HEK293 (cell line): ENCODE measurements at regions of chr10 and their contacts with region 1.

Region 1: DNA sequence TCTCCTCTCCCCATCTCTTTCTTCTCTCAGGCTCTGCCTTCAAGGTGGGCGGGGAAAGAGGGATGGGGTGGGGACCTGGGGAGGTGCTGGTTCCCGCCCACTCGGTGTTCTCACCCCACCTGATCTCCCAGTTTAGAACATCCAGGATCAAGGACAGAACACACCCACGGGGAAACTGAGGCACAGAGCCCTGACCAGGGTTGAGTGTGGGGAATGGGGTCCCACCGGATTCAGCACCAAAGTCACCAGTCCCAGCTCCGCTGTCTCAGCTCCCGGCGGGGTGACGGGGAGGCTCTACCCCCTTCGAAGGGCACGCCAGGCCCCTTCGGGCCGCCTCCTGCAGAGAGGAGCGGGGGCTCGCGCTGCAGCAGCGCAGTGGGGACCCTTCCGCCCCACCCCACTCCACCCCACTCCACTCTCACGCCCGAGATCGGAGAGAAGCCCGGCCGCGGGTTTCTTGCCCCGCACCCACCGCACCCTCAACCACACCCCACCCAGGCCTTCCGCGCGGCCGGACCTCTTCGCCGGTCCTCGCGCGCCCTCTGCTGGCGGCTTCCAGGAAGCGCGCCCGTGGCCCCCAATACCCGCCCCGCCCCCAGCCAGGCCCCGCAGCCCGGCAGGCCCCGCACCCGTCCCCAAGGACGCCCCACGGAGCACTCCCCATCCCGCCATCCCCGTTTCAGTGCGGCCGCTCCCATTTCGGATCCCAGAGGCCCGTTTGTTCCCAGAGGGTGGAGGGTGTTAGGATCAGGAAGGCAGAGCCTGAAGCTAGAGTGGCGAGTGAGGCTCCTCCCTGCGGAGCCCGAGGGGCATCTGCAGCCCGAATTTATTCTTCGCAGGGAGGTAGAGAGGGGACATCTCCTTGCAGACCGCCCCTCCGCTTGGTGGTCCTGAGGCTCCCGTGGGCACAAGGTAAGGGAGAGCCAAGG is 18.0 kb downstream of the POLL start:
- H3K4me3 ChIP-seq: peak overlapping the region; percentile 65
- H3K27ac ChIP-seq: no peak overlapping the region; the same call in 1 of the 2 replicates
- H3K4me1 ChIP-seq: peaks cover 3% of the 10 kb centered on the region
- CTCF ChIP-seq: peak; percentile 93

Region 2: DNA sequence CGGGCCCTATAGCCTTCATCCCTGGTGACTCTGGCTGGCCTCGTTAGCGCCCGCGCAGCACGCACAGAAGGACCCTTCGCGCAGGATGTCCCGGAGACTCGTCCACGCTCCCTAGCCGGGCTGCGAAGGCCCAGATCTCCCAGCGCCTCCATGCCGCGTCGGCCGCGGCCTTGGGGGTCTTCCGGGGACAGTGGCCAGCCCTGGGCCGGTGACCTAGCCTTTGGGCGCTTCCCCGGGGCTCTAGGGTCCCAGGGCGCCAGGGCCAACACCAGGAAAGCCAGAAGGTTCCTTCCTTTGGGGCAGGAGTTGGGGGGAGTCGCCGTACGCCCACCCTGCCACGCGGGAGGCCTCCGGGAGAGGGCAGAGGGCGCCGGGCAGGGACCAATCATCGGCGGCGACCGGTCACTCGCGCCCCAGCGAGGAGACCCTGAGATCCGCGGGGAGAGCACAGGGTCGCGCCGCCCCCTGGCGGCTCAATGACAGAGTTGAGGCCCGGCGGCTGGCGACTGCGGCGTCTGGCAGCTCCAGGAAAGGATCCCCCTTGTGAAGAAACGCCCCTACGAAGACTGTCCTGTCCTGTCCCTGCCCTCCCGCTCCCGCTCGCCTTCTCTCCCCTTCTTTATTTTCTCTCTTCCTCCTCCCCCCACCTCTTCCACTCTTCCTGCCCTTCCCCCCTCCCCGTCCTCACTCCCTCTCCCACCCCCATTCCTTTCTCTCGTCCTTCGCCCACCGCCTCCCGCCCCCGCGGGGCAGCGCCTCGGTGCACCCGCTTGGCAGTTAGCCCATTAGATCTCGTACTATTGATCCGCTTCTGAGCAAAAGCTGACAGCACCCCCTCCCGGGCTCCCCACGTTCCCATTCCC is 278.5 kb before region 1 on chr10:
- CTCF ChIA-PET with region 1: interaction called, 14 read pairs
- POLR2A ChIA-PET with region 1: interaction called, 7 read pairs
- H3K4me3 ChIP-seq: peak overlapping the region; percentile 51
- H3K27ac ChIP-seq: peak overlapping the region; percentile 24; the same call in 1 of the 2 replicates
- H3K4me1 ChIP-seq: peaks cover 3% of the 10 kb centered on the region; the same call in 1 of the 2 replicates
- CTCF ChIP-seq: peak; percentile 90

Region 3: DNA sequence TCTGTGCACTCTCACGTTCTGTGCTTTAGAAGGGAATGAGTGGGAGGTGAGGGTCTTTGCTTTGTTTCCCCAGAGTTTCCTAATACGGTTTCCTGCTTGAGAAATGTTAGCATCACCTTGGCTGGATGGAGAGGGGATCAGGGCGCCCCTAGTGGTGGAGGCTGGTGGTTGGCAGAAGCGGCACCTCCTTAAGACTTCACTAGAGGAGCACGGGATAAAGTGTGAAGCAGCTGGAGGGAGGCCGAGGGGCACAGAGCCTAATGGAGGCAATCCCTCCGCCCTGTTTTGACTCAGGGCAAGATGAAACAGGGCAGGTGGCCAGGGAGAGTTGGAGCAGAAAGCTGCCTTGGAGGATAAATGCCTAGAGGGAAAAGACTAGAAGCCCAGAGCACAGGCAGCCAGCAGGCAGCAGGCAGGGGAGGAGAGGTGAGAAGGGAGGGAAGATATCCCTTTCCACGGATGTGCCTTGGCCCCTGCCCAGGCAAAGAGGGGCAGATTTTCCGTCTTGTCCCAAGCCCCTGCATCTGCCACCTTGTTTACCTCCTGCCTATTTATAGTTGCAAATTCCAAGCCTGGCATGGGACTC is 272.1 kb before region 1 on chr10:
- CTCF ChIA-PET with region 1: interaction called, 18 read pairs
- POLR2A ChIA-PET with region 1: interaction called, 7 read pairs
- H3K4me3 ChIP-seq: no peak overlapping the region
- H3K27ac ChIP-seq: no peak overlapping the region
- H3K4me1 ChIP-seq: no peaks in the 10 kb centered on the region
- CTCF ChIP-seq: peak; percentile 89

Region 4: DNA sequence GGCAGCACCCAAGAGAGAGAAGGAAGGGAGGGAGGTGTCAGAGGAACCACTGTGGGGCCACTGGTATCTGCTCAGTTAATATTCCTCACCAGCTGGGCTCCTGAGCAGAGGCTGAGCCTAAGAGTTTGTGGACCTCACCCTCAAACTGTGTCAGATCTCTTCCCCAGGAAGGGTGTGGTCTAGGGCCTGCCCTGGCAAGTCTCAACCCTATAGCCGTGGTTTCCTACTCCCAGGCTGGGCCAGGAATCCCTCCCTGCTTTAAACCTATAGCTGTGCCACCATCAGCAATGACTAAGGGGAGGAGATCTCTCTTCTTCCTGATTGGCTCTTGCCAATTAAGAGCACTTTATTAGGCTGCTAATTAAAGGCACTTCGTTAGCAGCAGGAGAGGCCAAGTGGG is 11.9 kb before region 1 on chr10:
- CTCF ChIA-PET with region 1: interaction called, 13 read pairs
- POLR2A ChIA-PET with region 1: no interaction called
- H3K4me3 ChIP-seq: no peak overlapping the region
- H3K27ac ChIP-seq: no peak overlapping the region
- H3K4me1 ChIP-seq: no peaks in the 10 kb centered on the region
- CTCF ChIP-seq: no peak